Activated naive CD4-positive, alpha-beta T cell treated with anti-CD3 and anti-CD28 coated beads for 36 hours (primary cell): ENCODE measurements at regions of chr12 and their contacts with region 1.

Region 1: GRCh38 chr12:45990468-45991283 is at the start of gene SCAF11:
- DNase-seq: peak; percentile 100
- H3K4me3 Mint-ChIP-seq: peak within 1 kb of the TSS; percentile 94
- H3K27ac Mint-ChIP-seq: peak within 1 kb of the TSS; percentile 99
- H3K4me1 Mint-ChIP-seq: peaks cover 36% of the 10 kb centered on the region
- H3K27me3 Mint-ChIP-seq: no peaks in the 10 kb centered on the region
- total RNA-seq, gene SCAF11: 95.0 to 97.7 TPM

Region 2: GRCh38 chr12:44847888-44848702 is 1142.6 kb before region 1 on chr12:
- CTCF ChIA-PET with region 1: no interaction called
- intact Hi-C with region 1: loop called (anchors 10 kb)
- DNase-seq: peak; percentile 79
- H3K4me3 Mint-ChIP-seq: peak overlapping the region; percentile 55
- H3K27ac Mint-ChIP-seq: peak overlapping the region; percentile 94
- H3K4me1 Mint-ChIP-seq: peaks cover 72% of the 10 kb centered on the region
- H3K27me3 Mint-ChIP-seq: no peaks in the 10 kb centered on the region

Region 3: DNA sequence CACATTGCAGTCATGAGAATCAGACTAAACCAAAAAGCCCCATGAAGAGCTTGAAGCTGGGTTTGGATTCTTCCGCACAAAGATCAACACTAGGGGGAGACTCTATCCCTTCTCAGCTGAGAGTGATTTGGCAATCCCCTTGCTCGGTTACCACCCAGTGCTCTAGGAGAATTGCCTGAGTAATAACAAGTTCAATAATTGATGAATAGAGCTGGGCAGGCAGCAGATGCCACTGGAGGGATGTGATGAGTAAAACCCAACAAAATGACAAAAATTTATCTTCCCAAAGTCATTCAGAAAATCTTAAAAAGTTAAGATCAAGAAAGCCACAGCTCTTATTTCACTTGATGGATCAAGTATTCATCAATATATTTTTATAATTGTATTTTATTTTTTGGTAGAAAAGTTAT is 446.8 kb before region 1 on chr12:
- CTCF ChIA-PET with region 1: interaction called, 3 read pairs
- intact Hi-C with region 1: loop called (anchors 2 kb)
- DNase-seq: peak; percentile 70
- H3K4me3 Mint-ChIP-seq: no peak overlapping the region
- H3K27ac Mint-ChIP-seq: no peak overlapping the region
- H3K4me1 Mint-ChIP-seq: no peaks in the 10 kb centered on the region
- H3K27me3 Mint-ChIP-seq: peaks cover 6% of the 10 kb centered on the region

Region 4: GRCh38 chr12:46005151-46005797 is 14.6 kb after region 1 on chr12:
- CTCF ChIA-PET with region 1: interaction called, 8 read pairs
- intact Hi-C with region 1: loop called (anchors 1 kb)
- DNase-seq: no peak
- H3K4me3 Mint-ChIP-seq: no peak overlapping the region
- H3K27ac Mint-ChIP-seq: no peak overlapping the region
- H3K4me1 Mint-ChIP-seq: no peaks in the 10 kb centered on the region
- H3K27me3 Mint-ChIP-seq: no peaks in the 10 kb centered on the region

Region 5: GRCh38 chr12:46217541-46218321 is 227.1 kb after region 1 on chr12:
- CTCF ChIA-PET with region 1: no interaction called
- intact Hi-C with region 1: loop called (anchors 1 kb)
- DNase-seq: peak; percentile 74
- H3K4me3 Mint-ChIP-seq: peak overlapping the region; percentile 33
- H3K27ac Mint-ChIP-seq: peak overlapping the region; percentile 100
- H3K4me1 Mint-ChIP-seq: peaks cover 95% of the 10 kb centered on the region
- H3K27me3 Mint-ChIP-seq: no peaks in the 10 kb centered on the region

Region 6: GRCh38 chr12:46523863-46524770 is 533.4 kb after region 1 on chr12:
- CTCF ChIA-PET with region 1: no interaction called
- intact Hi-C with region 1: loop called (anchors 10 kb)
- DNase-seq: peak; percentile 76
- H3K4me3 Mint-ChIP-seq: peak overlapping the region; percentile 61
- H3K27ac Mint-ChIP-seq: peak overlapping the region; percentile 81
- H3K4me1 Mint-ChIP-seq: peaks cover 38% of the 10 kb centered on the region
- H3K27me3 Mint-ChIP-seq: no peaks in the 10 kb centered on the region

Region 7: GRCh38 chr12:47397664-47398281 is 1407.1 kb after region 1 on chr12:
- CTCF ChIA-PET with region 1: no interaction called
- intact Hi-C with region 1: loop called (anchors 5 kb)
- DNase-seq: peak; percentile 72
- H3K4me3 Mint-ChIP-seq: peak overlapping the region; percentile 33
- H3K27ac Mint-ChIP-seq: peak overlapping the region; percentile 100
- H3K4me1 Mint-ChIP-seq: peaks cover 95% of the 10 kb centered on the region
- H3K27me3 Mint-ChIP-seq: no peaks in the 10 kb centered on the region